Endothelial cell of umbilical vein (primary cell): ENCODE measurements at regions of chr2 and their contacts with region 1.

Region 1: DNA sequence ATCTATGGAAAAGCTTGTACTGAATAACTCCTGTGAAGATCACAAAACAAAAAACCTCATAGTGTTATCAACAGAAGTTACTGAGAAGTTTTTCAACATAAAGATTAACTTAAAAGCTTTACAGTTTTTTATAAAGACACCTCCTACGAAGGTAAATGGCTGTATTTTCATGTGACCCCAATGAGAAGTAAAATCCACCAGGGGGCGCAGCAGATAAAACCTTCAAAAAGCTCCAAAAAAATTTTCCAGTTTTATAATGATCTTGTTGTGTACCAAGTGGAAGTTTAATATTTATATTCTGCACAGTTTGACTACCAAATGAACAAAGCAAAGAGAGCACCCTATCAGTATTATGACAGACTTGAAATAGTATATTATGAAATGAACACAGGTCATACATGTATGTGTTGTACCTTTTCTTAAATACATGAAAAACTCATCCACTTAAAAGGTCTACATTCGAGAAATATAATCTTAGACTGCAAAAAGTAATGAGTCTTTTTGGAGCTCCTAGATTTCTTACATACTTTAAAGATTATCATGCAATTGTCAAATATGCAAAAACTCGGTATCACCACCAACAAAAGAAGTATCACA is 38.5 kb downstream of the PNO1 start:
- DNase-seq: peak; percentile 45
- H3K4me3 ChIP-seq: no peak overlapping the region
- H3K27ac ChIP-seq: no peak overlapping the region
- H3K4me1 ChIP-seq: peaks cover 36% of the 10 kb centered on the region
- H3K27me3 ChIP-seq: no peaks in the 10 kb centered on the region
- CTCF ChIP-seq: peak; percentile 30 to 35
- POLR2A ChIP-seq: no peak

Region 2: DNA sequence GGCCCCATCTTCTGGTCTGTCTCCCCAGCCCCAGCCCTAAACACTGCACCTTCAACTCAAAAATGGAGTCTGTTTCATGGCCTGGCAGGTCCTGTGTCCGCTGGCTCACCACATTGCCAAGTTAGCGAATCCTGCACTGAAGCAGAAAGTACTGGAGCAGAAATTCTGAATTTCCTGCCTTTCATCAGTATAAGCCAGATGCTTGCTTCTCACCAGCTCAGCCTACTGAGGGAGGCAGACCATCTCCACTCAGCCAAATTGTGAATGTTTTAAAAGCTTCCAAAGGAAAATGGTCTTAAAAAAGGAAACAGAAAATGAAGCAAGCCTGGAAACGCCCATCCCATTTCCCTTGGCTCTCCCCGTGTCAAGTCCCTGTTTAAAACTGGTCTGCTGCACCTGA is 291.3 kb before region 1 on chr2:
- CTCF ChIA-PET with region 1: no interaction called
- POLR2A ChIA-PET with region 1: no interaction called
- dilution Hi-C with region 1: no loop called
- intact Hi-C with region 1: no loop called
- DNase-seq: no peak
- H3K4me3 ChIP-seq: no peak overlapping the region
- H3K27ac ChIP-seq: no peak overlapping the region
- H3K4me1 ChIP-seq: no peaks in the 10 kb centered on the region
- H3K27me3 ChIP-seq: no peaks in the 10 kb centered on the region
- CTCF ChIP-seq: no peak
- POLR2A ChIP-seq: no peak

Region 3: GRCh38 chr2:68216454-68217310 is 20.5 kb after region 1 on chr2:
- CTCF ChIA-PET with region 1: interaction called, 33 read pairs
- POLR2A ChIA-PET with region 1: no interaction called
- dilution Hi-C with region 1: no loop called
- intact Hi-C with region 1: no loop called
- DNase-seq: no peak
- H3K4me3 ChIP-seq: no peak overlapping the region
- H3K27ac ChIP-seq: no peak overlapping the region
- H3K4me1 ChIP-seq: peaks cover 5% of the 10 kb centered on the region
- H3K27me3 ChIP-seq: no peaks in the 10 kb centered on the region
- CTCF ChIP-seq: no peak
- POLR2A ChIP-seq: no peak

Region 4: GRCh38 chr2:68238955-68239822 is 43.0 kb after region 1 on chr2:
- CTCF ChIA-PET with region 1: interaction called, 52 read pairs
- POLR2A ChIA-PET with region 1: no interaction called
- dilution Hi-C with region 1: no loop called
- intact Hi-C with region 1: no loop called
- DNase-seq: peak; percentile 44
- H3K4me3 ChIP-seq: peak overlapping the region in 1 of 3 experiments; percentile 25
- H3K27ac ChIP-seq: peak overlapping the region; percentile 40
- H3K4me1 ChIP-seq: peaks cover 40% of the 10 kb centered on the region
- H3K27me3 ChIP-seq: no peaks in the 10 kb centered on the region
- CTCF ChIP-seq: no peak
- POLR2A ChIP-seq: no peak

Region 5: GRCh38 chr2:68251187-68251854 is 55.1 kb after region 1 on chr2:
- CTCF ChIA-PET with region 1: interaction called, 60 read pairs
- POLR2A ChIA-PET with region 1: no interaction called
- dilution Hi-C with region 1: no loop called
- intact Hi-C with region 1: loop called (anchors 1 kb)
- DNase-seq: peak; percentile 85
- H3K4me3 ChIP-seq: peak overlapping the region; percentile 55 to 98 (median 88)
- H3K27ac ChIP-seq: peak overlapping the region; percentile 82
- H3K4me1 ChIP-seq: peaks cover 38% of the 10 kb centered on the region
- H3K27me3 ChIP-seq: no peaks in the 10 kb centered on the region
- CTCF ChIP-seq: peak; percentile 63
- POLR2A ChIP-seq: no peak

Region 6: DNA sequence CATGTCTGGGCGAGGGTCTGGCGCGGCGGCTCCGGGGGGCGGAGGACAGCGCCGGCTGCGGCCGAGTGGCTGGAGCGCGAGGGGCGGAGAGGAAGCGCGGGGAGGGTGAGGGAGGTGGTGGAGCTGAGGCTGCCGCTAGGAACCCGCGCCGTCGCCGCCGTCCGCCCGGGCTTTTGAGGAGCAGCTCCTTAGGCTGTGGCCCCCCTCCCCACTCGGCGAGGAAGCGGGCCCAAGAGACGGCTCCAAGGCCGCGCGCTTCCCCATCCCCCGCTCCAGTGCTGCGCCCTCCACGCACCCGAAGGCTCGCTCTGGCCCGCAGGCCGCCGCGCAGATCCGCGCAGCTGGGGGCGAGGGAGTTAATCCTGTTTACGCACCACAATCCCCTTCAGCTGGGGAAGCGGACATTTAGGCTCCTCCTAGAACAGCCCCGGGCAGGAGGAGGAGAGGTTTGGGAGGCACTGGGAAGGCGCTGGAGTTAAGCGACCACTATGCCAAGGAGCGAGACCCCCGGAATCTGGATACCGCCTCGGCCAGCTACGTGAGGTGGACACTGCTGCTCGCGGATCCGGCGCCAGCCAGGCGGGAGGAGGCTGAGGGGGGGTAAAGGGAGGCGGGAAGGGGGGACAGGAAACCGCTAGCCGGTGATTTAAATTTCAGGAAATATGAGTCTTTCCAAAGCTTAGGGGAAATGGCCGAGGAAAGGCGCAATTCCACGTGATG is 123.3 kb after region 1 on chr2 and contains the start of gene CNRIP1:
- CTCF ChIA-PET with region 1: interaction called, 11 read pairs
- POLR2A ChIA-PET with region 1: no interaction called
- dilution Hi-C with region 1: no loop called
- intact Hi-C with region 1: no loop called
- DNase-seq: peak; percentile 94
- H3K4me3 ChIP-seq: peak within 1 kb of the TSS; percentile 60 to 83 (median 79)
- H3K27ac ChIP-seq: peak within 1 kb of the TSS; percentile 99
- H3K4me1 ChIP-seq: peaks cover 22% of the 10 kb centered on the region
- H3K27me3 ChIP-seq: no peaks in the 10 kb centered on the region
- CTCF ChIP-seq: no peak
- POLR2A ChIP-seq: no peak
- total RNA-seq, gene CNRIP1: 73.8 and 74.6 TPM in 2 replicates

Region 7: DNA sequence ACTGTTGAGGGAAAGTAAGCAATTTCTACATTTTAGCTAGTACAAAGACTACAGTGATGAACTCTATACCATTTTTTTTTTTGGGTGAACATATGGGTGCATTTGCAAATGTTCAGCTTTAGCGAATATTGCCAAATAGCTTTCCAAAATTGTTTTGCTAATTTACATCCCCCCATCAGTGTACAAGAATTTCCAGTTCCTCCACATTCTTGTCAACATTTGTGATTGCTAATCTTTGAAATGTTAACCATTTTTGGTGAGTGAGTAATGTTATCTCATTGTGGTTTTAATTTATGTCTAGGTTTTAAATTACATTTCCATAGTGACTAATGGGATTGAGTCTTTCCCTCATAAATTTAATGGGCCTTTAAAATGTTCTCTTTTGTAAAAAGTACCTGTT is 140.0 kb after region 1 on chr2:
- CTCF ChIA-PET with region 1: no interaction called
- POLR2A ChIA-PET with region 1: no interaction called
- dilution Hi-C with region 1: no loop called
- intact Hi-C with region 1: no loop called
- DNase-seq: peak; percentile 4
- H3K4me3 ChIP-seq: no peak overlapping the region
- H3K27ac ChIP-seq: no peak overlapping the region
- H3K4me1 ChIP-seq: peaks cover 3% of the 10 kb centered on the region
- H3K27me3 ChIP-seq: peaks cover 2 to 14% of the 10 kb centered on the region in 2 experiments
- CTCF ChIP-seq: no peak
- POLR2A ChIP-seq: no peak

Region 8: GRCh38 chr2:68441179-68441993 is 245.2 kb after region 1 on chr2:
- CTCF ChIA-PET with region 1: interaction called, 24 read pairs
- POLR2A ChIA-PET with region 1: no interaction called
- dilution Hi-C with region 1: no loop called
- intact Hi-C with region 1: loop called (anchors 1 kb)
- DNase-seq: peak; percentile 67
- H3K4me3 ChIP-seq: no peak overlapping the region
- H3K27ac ChIP-seq: no peak overlapping the region
- H3K4me1 ChIP-seq: no peaks in the 10 kb centered on the region
- H3K27me3 ChIP-seq: peaks cover 3 to 12% of the 10 kb centered on the region in 2 experiments
- CTCF ChIP-seq: peak; percentile 79 to 83
- POLR2A ChIP-seq: no peak